B cell (primary cell): ENCODE measurements at regions of chr15 and their contacts with region 1.

Region 1: DNA sequence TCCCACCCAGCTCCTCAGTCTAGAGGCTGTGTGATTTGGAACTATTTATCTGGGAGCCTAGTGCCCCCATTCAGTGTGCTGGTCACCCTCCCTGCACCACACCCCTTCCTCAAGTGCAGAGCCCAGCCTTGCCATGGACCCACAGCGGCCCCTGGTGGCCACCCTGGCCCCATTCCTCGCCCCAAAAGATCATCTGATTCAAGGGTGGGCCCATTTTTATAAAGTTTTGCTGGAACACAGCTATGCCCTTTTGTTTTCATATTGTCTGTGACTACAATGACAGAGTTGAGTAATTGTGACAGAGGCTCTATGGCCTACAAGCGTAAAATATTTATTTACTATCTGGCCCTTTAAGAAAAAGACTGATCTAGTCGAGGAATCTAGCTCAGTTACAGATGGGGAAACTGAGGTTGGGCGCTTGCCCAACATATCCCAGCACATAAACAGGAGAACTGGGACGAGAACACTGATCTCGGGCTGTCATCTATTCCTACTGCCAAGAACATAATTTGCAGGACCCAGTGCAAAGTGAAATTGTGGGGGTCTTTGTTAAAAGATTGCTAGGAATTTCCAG is 1.8 kb downstream of the FES start:
- DNase-seq: peak; percentile 87
- ATAC-seq: peak; percentile 67
- H3K4me3 ChIP-seq: peak overlapping the region in 3 of 5 experiments; percentile 16 to 61 (median 51)
- H3K4me3 Mint-ChIP-seq: peak overlapping the region; percentile 80
- H3K27ac ChIP-seq: no peak overlapping the region
- H3K27ac Mint-ChIP-seq: peak overlapping the region; percentile 88
- H3K4me1 ChIP-seq: peaks cover 25 to 32% of the 10 kb centered on the region in 2 donors
- H3K4me1 Mint-ChIP-seq: peaks cover 22% of the 10 kb centered on the region
- H3K27me3 ChIP-seq: no peaks in the 10 kb centered on the region
- H3K27me3 Mint-ChIP-seq: no peaks in the 10 kb centered on the region
- CTCF ChIP-seq: peak; percentile 99

Region 2: DNA sequence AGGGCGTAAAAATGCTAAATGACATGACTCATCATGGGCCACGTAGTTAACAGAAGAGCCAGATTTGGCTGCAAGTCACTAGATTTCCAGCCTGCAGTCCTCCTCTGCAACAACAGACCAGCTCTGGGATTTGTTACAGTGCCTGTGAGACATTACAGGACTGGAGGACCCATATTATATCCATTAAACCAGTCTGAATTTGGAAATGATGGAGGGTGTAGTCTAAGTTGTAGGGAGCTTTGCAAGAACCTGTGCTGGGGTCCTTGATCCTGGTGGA is 523.3 kb before region 1 on chr15:
- CTCF ChIA-PET with region 1: interaction called, 8 read pairs
- POLR2A ChIA-PET with region 1: no interaction called
- intact Hi-C with region 1: loop called (anchors 5 kb)
- DNase-seq: no peak
- ATAC-seq: no peak
- H3K4me3 ChIP-seq: no peak overlapping the region
- H3K4me3 Mint-ChIP-seq: no peak overlapping the region
- H3K27ac ChIP-seq: no peak overlapping the region
- H3K27ac Mint-ChIP-seq: no peak overlapping the region
- H3K4me1 ChIP-seq: peaks cover 5 to 9% of the 10 kb centered on the region in 2 donors
- H3K4me1 Mint-ChIP-seq: peaks cover 4% of the 10 kb centered on the region
- H3K27me3 ChIP-seq: no peaks in the 10 kb centered on the region
- H3K27me3 Mint-ChIP-seq: no peaks in the 10 kb centered on the region
- CTCF ChIP-seq: no peak

Region 3: DNA sequence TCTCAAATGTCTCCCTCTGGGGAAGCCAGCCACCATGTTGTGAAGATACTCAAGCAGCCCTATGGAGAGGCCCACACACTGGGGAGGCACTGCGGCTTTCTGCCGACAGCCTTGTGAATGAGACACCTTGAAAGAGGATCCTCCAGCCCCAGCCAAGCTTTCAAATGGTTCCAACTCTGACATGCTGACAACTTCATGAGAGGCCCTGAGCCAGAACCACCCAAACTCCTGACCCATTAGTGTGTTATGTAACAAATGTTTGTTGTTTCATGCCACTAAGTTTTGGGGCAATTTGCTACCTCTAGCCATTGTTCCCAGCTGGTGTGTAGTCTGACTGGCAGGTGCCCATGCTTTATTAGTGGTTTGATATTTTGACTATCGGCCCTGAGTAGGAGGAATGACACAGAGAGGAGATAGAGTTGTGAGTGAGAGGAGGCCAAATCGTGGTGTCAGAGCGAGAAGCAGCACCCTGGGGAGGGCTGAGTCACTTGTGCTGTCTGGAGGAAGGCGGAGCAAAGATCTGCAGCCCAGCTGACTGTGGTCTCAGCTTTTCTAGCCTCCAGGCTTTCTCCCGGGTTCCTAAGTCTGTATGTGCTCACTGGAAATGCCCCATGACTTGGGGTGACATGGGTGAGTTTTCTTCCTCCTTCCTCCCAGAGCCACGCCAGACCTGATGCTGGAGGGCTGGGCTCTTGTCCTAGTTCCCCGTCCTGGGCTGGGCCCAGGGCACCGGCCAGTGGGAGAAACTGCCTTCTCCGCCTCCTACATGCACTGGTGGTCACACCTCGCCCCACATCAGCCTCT is 225.7 kb before region 1 on chr15:
- CTCF ChIA-PET with region 1: interaction called, 11 read pairs
- POLR2A ChIA-PET with region 1: no interaction called
- intact Hi-C with region 1: loop called (anchors 5 kb)
- DNase-seq: peak; percentile 58
- ATAC-seq: peak; percentile 82
- H3K4me3 ChIP-seq: peak overlapping the region; percentile 7 to 55 (median 30)
- H3K4me3 Mint-ChIP-seq: peak overlapping the region; percentile 66
- H3K27ac ChIP-seq: no peak overlapping the region
- H3K27ac Mint-ChIP-seq: peak overlapping the region; percentile 43
- H3K4me1 ChIP-seq: peaks cover 80 to 88% of the 10 kb centered on the region in 2 donors
- H3K4me1 Mint-ChIP-seq: peaks cover 76% of the 10 kb centered on the region
- H3K27me3 ChIP-seq: peaks cover 0 to 49% (median 29%) of the 10 kb centered on the region in 4 experiments
- H3K27me3 Mint-ChIP-seq: peaks cover 39% of the 10 kb centered on the region
- CTCF ChIP-seq: no peak

Region 4: DNA sequence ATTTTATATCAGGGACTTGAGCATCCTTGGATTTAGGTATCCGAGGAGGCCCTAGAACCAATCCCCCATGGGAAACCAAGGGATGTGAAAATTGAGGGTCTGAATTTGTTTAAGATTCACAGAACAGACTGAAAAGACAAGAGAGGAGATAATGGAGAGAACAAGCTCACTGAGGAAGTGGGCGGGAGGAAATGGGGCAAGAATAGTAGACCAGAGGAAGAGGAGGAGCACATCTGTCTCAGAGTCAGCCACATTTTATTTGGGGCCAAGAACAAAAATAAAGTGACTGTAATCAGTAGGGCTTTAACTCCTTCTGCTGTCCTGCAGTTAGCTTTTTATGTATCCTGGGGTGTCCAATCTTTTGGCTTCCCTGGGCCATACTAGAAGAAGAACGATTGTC is 105.2 kb before region 1 on chr15:
- CTCF ChIA-PET with region 1: interaction called, 29 read pairs
- POLR2A ChIA-PET with region 1: no interaction called
- intact Hi-C with region 1: no loop called
- DNase-seq: no peak
- ATAC-seq: no peak
- H3K4me3 ChIP-seq: no peak overlapping the region
- H3K4me3 Mint-ChIP-seq: peak overlapping the region; percentile 47
- H3K27ac ChIP-seq: peak overlapping the region in 1 of 2 donors; percentile 21
- H3K27ac Mint-ChIP-seq: peak overlapping the region; percentile 50
- H3K4me1 ChIP-seq: peaks cover 11 to 17% of the 10 kb centered on the region in 2 donors
- H3K4me1 Mint-ChIP-seq: peaks cover 35% of the 10 kb centered on the region
- H3K27me3 ChIP-seq: no peaks in the 10 kb centered on the region
- H3K27me3 Mint-ChIP-seq: no peaks in the 10 kb centered on the region
- CTCF ChIP-seq: no peak

Region 5: DNA sequence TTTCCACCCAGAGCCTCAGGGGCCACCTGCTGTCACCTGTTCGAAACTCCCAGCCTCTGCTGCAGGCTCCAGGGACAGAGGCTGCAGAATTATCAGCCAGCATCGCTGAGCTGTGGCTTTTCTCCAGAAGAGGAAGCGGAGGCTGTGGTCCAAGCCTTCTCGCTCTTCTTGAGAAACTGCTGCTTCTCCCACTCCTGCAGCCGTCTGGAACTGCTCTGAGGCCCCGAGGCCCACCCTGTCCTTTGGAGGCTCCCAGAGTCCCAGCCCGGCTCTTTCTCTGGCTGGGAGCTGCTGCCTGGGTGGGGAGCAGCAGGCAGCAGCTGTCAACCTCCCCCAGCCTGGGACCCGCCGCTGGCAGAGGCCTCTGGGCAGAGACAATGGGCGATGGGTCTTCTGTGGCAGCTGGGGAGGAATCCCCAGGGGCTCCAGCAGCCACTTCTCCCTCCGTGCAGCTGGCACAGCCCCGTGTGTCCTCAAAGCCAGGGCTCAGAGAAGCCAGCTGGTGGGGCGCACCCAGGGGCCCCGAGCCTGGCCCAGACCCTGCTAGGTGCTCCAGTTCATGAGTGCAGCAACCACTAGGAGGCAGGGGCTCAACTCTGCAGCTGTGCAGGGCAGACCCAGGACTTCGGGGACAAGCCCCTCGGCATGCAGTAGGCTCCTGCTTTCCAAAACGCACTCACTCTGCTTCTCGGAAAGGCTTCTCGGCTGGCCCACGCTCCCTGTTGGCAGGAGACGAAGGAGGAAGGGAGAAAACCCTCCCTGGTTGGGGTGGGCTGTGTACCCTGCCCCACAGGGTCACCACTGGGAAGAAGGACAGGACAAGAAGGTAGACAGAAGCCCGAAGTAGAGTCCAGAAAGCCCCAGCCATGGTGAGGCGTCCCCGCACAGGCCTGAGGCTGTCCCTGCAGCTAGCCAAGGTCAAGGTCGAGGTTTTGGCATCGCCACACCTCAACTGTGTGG is 67.6 kb before region 1 on chr15:
- CTCF ChIA-PET with region 1: interaction called, 72 read pairs
- POLR2A ChIA-PET with region 1: interaction called, 11 read pairs
- intact Hi-C with region 1: loop called (anchors 1 kb)
- DNase-seq: peak; percentile 85
- ATAC-seq: peak; percentile 97
- H3K4me3 ChIP-seq: peak overlapping the region in 4 of 5 experiments; percentile 2 to 25 (median 20)
- H3K4me3 Mint-ChIP-seq: peak overlapping the region; percentile 72
- H3K27ac ChIP-seq: no peak overlapping the region
- H3K27ac Mint-ChIP-seq: peak overlapping the region; percentile 66
- H3K4me1 ChIP-seq: peaks cover 18 to 32% of the 10 kb centered on the region in 2 donors
- H3K4me1 Mint-ChIP-seq: peaks cover 43% of the 10 kb centered on the region
- H3K27me3 ChIP-seq: no peaks in the 10 kb centered on the region
- H3K27me3 Mint-ChIP-seq: no peaks in the 10 kb centered on the region
- CTCF ChIP-seq: peak; percentile 71

Region 6: DNA sequence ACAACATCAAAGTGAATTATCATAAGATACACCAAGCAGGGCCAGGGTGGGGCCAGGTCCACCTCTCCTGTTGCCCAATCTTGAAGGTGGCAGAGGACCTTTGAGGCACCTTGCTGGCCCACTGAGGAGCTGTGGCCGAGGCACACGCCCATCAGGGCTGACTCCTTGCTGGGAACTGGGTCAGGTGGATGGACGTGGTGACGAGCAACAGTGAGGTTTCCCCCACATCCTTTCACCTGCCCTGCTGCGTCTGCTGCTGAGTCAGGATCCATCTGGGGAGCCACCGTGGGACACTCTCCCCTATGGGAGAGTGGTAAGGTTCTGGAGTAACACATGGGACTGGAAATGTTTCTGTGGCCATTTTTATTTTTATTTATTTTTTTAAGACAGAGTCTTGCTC is 35.0 kb before region 1 on chr15:
- CTCF ChIA-PET with region 1: interaction called, 12 read pairs
- POLR2A ChIA-PET with region 1: no interaction called
- intact Hi-C with region 1: loop called (anchors 5 kb)
- DNase-seq: no peak
- ATAC-seq: no peak
- H3K4me3 ChIP-seq: no peak overlapping the region
- H3K4me3 Mint-ChIP-seq: peak overlapping the region; percentile 66
- H3K27ac ChIP-seq: no peak overlapping the region
- H3K27ac Mint-ChIP-seq: peak overlapping the region; percentile 41
- H3K4me1 ChIP-seq: peaks cover 54 to 56% of the 10 kb centered on the region in 2 donors
- H3K4me1 Mint-ChIP-seq: peaks cover 54% of the 10 kb centered on the region
- H3K27me3 ChIP-seq: no peaks in the 10 kb centered on the region
- H3K27me3 Mint-ChIP-seq: no peaks in the 10 kb centered on the region
- CTCF ChIP-seq: no peak